ENCODE measurements at regions of chr1 and their contacts with region 1.

Region 1: GRCh38 chr1:52002038-52002917 is 11.8 kb upstream of the RAB3B start:
- DNase-seq: peak in 1 of 2 donors; percentile 87
- ATAC-seq: peak; percentile 88 to 100 (median 98)
- H3K4me3 ChIP-seq: no peak overlapping the region
- H3K4me3 Mint-ChIP-seq: no peak overlapping the region
- H3K27ac ChIP-seq: no peak overlapping the region
- H3K27ac Mint-ChIP-seq: no peak overlapping the region
- H3K4me1 ChIP-seq: no peaks in the 10 kb centered on the region
- H3K4me1 Mint-ChIP-seq: no peaks in the 10 kb centered on the region
- H3K27me3 ChIP-seq: no peaks in the 10 kb centered on the region
- H3K27me3 Mint-ChIP-seq: peaks cover 21 to 26% of the 10 kb centered on the region in 2 donors
- CTCF ChIP-seq: peak; percentile 85

Region 2: GRCh38 chr1:51627678-51628077 is 374.6 kb before region 1 on chr1:
- intact Hi-C with region 1: loop called (anchors 5 kb)
- DNase-seq: peak in 1 of 2 donors; percentile 33
- ATAC-seq: peak in 1 of 3 donors; percentile 26
- H3K4me3 ChIP-seq: no peak overlapping the region
- H3K4me3 Mint-ChIP-seq: no peak overlapping the region
- H3K27ac ChIP-seq: no peak overlapping the region
- H3K27ac Mint-ChIP-seq: no peak overlapping the region
- H3K4me1 ChIP-seq: no peaks in the 10 kb centered on the region
- H3K4me1 Mint-ChIP-seq: peaks cover 12 to 19% of the 10 kb centered on the region in 2 donors
- H3K27me3 ChIP-seq: no peaks in the 10 kb centered on the region
- H3K27me3 Mint-ChIP-seq: no peaks in the 10 kb centered on the region
- CTCF ChIP-seq: no peak

Region 3: DNA sequence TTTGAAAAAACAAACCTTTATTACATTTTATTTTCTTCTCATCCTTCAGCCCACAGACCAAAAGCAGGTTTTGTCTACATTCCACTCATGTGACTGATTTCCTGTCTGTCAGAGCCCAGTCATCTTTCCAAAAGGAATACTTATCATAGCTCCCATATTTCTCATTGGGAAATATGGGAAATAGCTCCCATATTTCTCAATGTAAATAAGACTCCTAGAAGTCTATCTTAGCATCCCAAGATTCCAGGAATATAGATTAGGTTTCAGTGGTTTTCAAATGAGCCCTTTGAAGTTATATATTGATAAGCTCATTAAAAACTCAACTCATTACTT is 104.6 kb before region 1 on chr1:
- intact Hi-C with region 1: loop called (anchors 1 kb)
- DNase-seq: no peak
- ATAC-seq: no peak
- H3K4me3 ChIP-seq: no peak overlapping the region
- H3K4me3 Mint-ChIP-seq: no peak overlapping the region
- H3K27ac ChIP-seq: no peak overlapping the region
- H3K27ac Mint-ChIP-seq: no peak overlapping the region
- H3K4me1 ChIP-seq: no peaks in the 10 kb centered on the region
- H3K4me1 Mint-ChIP-seq: no peaks in the 10 kb centered on the region
- H3K27me3 ChIP-seq: peaks cover 14% of the 10 kb centered on the region
- H3K27me3 Mint-ChIP-seq: peaks cover 37 to 68% of the 10 kb centered on the region in 2 donors
- CTCF ChIP-seq: no peak

Measured in natural killer cell (primary cell).